ENCODE measurements at regions of chr10 and their contacts with region 1.

Region 1: DNA sequence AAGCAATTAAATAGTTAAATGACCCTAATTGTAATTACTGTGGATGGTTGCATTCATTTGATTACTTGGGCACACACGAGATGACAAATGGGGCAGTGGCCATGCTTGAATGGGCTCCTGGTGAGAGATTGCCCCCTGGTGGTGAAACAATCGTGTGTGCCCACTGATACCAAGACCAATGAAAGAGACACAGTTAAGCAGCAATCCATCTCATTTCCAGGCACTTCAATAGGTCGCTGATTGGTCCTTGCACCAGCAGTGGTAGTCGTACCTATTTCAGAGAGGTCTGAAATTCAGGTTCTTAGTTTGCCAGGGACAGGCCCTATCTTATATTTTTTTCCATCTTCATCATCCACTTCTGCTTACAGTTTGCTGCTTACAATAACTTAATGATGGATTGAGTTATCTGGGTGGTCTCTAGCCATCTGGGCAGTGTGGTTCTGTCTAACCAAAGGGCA is 8.3 kb downstream of the PCBD1 start:
- DNase-seq: peak; percentile 78 to 85
- H3K4me3 ChIP-seq: no peak overlapping the region
- H3K27ac ChIP-seq: peak overlapping the region in 1 of 3 donors; percentile 77
- H3K4me1 ChIP-seq: peaks cover 0 to 14% of the 10 kb centered on the region in 2 donors
- H3K27me3 ChIP-seq: no peaks in the 10 kb centered on the region
- CTCF ChIP-seq: peak; percentile 83 to 97 (median 91)
- POLR2A ChIP-seq: no peak

Region 2: DNA sequence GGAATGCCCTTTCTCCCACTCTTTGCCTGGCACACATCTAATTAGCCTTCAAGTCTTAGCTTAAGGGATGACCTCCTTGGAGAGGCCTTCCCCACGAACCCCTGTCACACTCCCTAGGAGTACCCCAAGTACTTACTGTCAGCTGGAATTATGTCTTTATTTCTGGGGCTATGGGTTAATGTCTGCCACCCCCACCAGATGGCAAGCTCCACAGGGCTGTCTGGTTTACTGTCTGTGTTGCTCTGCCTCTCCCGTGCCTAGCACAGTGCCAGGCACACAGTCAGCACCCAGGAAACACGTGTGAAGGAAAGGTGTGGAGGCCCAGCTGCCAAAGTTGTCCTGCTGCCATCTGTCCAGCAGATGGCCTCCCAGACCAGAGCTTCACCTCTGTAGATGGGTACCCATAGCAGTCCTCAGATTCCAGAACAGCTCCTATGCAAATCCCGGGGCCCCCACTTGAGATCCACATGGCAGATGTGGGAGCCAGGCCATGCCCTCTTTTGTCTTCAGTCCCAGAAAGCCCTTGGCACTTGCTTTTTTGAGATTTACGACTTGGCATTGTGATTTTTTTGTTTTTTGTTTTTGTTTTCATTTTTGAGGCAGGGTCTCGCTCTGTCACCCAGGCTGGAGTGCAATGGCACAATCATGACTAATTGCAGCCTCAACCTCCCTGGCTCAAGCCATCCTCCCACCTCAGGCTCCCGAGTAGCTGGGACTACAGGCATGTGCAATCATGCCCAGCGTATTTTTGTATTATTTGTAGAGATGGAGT is 418.7 kb before region 1 on chr10:
- intact Hi-C with region 1: loop called (anchors 10 kb)
- DNase-seq: peak; percentile 53 to 56
- H3K4me3 ChIP-seq: no peak overlapping the region
- H3K27ac ChIP-seq: no peak overlapping the region
- H3K4me1 ChIP-seq: peaks cover 11 to 20% of the 10 kb centered on the region in 2 donors
- H3K27me3 ChIP-seq: no peaks in the 10 kb centered on the region
- CTCF ChIP-seq: peak; percentile 47 to 88 (median 78)
- POLR2A ChIP-seq: no peak

Region 3: DNA sequence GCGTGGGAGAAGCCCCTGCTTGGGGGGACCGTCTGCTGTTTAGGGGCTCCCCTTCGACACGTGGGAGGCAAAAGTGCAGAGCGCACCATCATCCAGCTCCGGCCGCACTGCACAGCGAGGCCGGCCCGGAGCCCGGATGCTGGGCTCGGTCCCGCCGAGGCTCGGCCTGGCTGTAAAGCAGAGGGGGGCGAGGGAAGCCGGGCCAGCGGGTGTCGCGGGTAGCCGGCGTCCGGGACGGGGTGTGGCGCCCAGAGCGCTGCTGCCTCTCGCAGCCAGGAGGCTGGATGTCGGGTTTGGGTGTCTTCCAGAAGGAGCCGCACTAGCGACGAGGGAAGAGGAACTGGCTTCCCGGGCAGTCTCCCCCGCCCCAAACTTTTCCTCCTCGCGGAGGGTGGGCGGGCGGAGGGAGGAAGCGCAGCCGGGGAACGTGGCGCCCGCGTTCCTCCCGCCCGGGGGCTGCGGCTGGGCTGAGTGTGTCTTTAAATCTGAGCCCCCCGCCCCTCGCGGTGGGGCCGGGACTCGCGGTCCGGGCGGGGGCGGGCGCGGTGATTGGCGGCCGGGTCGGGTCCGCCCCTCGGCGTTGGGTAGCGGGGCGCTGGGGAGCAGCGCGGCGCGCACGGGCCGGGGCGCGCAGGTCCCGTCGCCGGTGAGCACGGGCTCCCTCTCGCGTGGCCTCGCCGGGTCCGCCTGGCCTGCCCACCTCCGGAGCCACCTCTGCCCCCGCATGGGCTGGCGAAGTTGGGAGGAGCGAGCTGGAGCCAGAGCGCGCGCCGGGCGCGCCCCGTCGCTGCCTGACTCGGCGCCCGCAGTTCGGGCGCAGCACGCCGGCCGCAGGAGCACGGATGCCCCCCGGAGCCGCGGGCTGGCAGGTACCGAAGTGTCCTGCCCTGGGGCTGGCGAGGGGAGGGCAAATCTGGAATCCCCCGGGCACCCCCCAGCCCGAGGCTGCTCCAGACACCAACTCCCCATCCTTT is 401.6 kb before region 1 on chr10 and contains the start of gene PALD1:
- intact Hi-C with region 1: no loop called
- DNase-seq: peak; percentile 48 to 50
- H3K4me3 ChIP-seq: peak within 1 kb of the TSS in 1 of 3 donors; percentile 45
- H3K27ac ChIP-seq: peak within 1 kb of the TSS; percentile 21 to 70 (median 24)
- H3K4me1 ChIP-seq: peaks cover 6 to 34% of the 10 kb centered on the region in 2 donors
- H3K27me3 ChIP-seq: no peaks in the 10 kb centered on the region
- CTCF ChIP-seq: peak in 1 of 6 experiments; percentile 11
- POLR2A ChIP-seq: peak in 1 of 2 donors; percentile 16
- total RNA-seq, gene PALD1: 10.7 to 28.2 (median 14.0) TPM

Region 4: GRCh38 chr10:70549962-70550458 is 330.1 kb before region 1 on chr10:
- intact Hi-C with region 1: loop called (anchors 10 kb)
- DNase-seq: peak; percentile 69 to 76
- H3K4me3 ChIP-seq: no peak overlapping the region
- H3K27ac ChIP-seq: no peak overlapping the region
- H3K4me1 ChIP-seq: peaks cover 5 to 16% of the 10 kb centered on the region in 2 donors
- H3K27me3 ChIP-seq: no peaks in the 10 kb centered on the region
- CTCF ChIP-seq: peak; percentile 80 to 95 (median 88)
- POLR2A ChIP-seq: no peak

Region 5: GRCh38 chr10:70561070-70561469 is 319.0 kb before region 1 on chr10:
- intact Hi-C with region 1: loop called (anchors 5 kb)
- DNase-seq: no peak
- H3K4me3 ChIP-seq: no peak overlapping the region
- H3K27ac ChIP-seq: no peak overlapping the region
- H3K4me1 ChIP-seq: peaks cover 4 to 11% of the 10 kb centered on the region in 2 donors
- H3K27me3 ChIP-seq: no peaks in the 10 kb centered on the region
- CTCF ChIP-seq: no peak
- POLR2A ChIP-seq: no peak

Region 6: DNA sequence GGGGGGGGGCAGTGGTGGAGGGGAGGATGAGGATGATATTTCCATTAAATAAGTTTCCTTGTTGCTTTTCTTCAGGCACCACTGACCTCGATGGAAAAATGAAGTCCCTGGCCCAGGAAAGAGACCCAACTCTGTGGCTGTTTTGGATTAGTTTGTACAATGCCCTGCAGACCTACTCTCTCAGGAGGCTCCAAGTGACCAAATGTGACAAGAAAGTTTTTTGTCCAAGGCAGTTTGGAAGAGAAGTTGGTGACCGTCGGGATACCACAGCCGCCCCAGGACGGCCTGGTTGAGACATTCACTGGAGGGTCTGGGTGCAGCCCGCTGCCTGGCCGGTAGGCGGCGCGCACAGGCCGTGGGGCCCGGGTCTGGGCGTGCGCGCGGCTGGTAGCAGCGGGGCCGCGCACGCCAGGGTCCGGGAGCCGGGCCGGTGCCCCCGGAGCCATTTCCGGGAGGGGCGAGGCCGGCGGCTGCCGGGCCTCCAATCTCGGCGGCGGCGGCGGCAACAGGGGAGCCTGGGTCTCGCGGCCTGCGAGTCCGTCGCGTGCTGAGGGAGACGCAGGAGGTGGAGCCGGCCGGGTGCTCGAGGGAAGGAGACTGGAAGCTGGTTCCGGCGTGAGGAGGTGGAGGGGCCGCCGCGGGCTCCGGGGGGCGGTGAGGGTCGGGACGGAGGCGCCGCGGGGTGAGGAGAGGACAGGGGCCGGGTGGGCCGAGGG is 64.4 kb before region 1 on chr10 and contains the start of gene SGPL1:
- intact Hi-C with region 1: loop called (anchors 2 kb)
- DNase-seq: peak; percentile 87 to 89
- H3K4me3 ChIP-seq: peak within 1 kb of the TSS; percentile 22 to 64 (median 54)
- H3K27ac ChIP-seq: peak within 1 kb of the TSS; percentile 85 to 91 (median 91)
- H3K4me1 ChIP-seq: peaks cover 5 to 36% of the 10 kb centered on the region in 2 donors
- H3K27me3 ChIP-seq: no peaks in the 10 kb centered on the region
- CTCF ChIP-seq: peak; percentile 56 to 100 (median 90)
- POLR2A ChIP-seq: peak; percentile 26 to 75
- total RNA-seq, gene SGPL1: 40.6 to 64.4 (median 46.1) TPM

Region 7: GRCh38 chr10:71124921-71125748 is 245.0 kb after region 1 on chr10:
- intact Hi-C with region 1: no loop called
- DNase-seq: no peak
- H3K4me3 ChIP-seq: no peak overlapping the region
- H3K27ac ChIP-seq: no peak overlapping the region
- H3K4me1 ChIP-seq: no peaks in the 10 kb centered on the region
- H3K27me3 ChIP-seq: no peaks in the 10 kb centered on the region
- CTCF ChIP-seq: no peak
- POLR2A ChIP-seq: no peak

Measured in thyroid gland (tissue), 4 donors.